Activated CD4-positive, alpha-beta T cell treated with anti-CD3 and anti-CD28 coated beads for 36 hours (primary cell): ENCODE measurements at regions of chr7 and their contacts with region 1.

Region 1: GRCh38 chr7:36986429-36987362 is 262.4 kb upstream of the AOAH start:
- DNase-seq: peak; percentile 80
- ATAC-seq: peak; percentile 74
- H3K4me3 Mint-ChIP-seq: no peak overlapping the region
- H3K27ac Mint-ChIP-seq: no peak overlapping the region
- H3K4me1 Mint-ChIP-seq: peaks cover 23% of the 10 kb centered on the region
- H3K27me3 Mint-ChIP-seq: no peaks in the 10 kb centered on the region

Region 2: DNA sequence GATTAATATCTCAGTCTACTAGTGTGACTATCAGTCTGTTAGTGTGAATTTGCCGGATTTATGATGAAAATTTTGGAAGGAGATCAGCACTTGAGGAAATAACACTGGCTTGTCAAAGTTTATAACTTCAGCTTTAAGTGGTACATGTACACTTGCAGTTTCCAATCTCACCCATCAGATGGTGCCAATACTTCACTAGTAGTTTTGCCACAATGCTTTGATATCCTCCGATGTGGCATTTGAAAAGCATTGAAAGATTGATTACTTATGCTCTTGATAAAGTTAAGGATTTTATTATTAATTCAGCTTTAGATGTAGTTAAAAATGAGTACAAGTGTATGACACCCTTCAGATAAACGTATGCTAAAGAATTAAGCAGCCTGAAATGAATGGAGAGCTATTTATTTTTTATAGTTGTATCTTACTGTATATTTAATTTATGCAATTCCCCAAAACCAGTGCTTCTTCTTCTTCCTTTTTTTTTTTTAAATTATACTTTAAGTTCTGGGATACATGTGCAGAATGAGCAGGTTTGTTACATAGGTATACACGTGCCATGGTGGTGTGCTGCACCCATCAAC is 498.9 kb before region 1 on chr7:
- CTCF ChIA-PET with region 1: no interaction called
- POLR2A ChIA-PET with region 1: no interaction called
- intact Hi-C with region 1: loop called in 1 of 2 experiments (anchors 5 kb)
- DNase-seq: peak; percentile 23
- ATAC-seq: peak; percentile 55
- H3K4me3 Mint-ChIP-seq: no peak overlapping the region
- H3K27ac Mint-ChIP-seq: no peak overlapping the region
- H3K4me1 Mint-ChIP-seq: peaks cover 2% of the 10 kb centered on the region
- H3K27me3 Mint-ChIP-seq: peaks cover 4% of the 10 kb centered on the region

Region 3: DNA sequence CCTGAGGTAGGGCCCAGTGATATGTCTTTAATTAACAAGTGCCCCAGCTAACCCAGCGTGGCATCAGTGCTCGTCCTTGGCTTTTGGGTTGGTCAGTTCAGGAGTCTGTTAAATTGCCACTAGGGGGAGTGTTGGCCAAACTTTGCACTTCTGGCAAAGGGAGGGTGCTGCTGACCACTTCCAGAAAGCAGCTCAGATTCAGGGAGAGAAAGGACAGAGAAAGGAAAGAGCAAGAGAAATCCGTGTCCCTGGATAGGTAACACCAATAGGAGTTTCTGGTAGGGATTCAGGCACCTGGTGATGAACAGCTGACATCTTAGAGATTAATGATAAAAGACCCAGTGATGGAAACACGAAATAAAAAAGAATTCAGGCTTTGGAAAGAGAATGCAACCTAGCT is 19.3 kb before region 1 on chr7:
- CTCF ChIA-PET with region 1: interaction called, 12 read pairs
- POLR2A ChIA-PET with region 1: no interaction called
- intact Hi-C with region 1: no loop called
- DNase-seq: peak; percentile 10
- ATAC-seq: no peak
- H3K4me3 Mint-ChIP-seq: no peak overlapping the region
- H3K27ac Mint-ChIP-seq: no peak overlapping the region
- H3K4me1 Mint-ChIP-seq: peaks cover 54% of the 10 kb centered on the region
- H3K27me3 Mint-ChIP-seq: no peaks in the 10 kb centered on the region

Region 4: GRCh38 chr7:37201003-37201875 is 214.5 kb after region 1 on chr7:
- CTCF ChIA-PET with region 1: interaction called, 7 read pairs
- POLR2A ChIA-PET with region 1: no interaction called
- intact Hi-C with region 1: loop called (anchors 5 kb)
- DNase-seq: peak; percentile 73
- ATAC-seq: no peak
- H3K4me3 Mint-ChIP-seq: no peak overlapping the region
- H3K27ac Mint-ChIP-seq: no peak overlapping the region
- H3K4me1 Mint-ChIP-seq: peaks cover 7% of the 10 kb centered on the region
- H3K27me3 Mint-ChIP-seq: no peaks in the 10 kb centered on the region